H1 (cell line): ENCODE measurements at regions of chr10 and their contacts with region 1.

Region 1: DNA sequence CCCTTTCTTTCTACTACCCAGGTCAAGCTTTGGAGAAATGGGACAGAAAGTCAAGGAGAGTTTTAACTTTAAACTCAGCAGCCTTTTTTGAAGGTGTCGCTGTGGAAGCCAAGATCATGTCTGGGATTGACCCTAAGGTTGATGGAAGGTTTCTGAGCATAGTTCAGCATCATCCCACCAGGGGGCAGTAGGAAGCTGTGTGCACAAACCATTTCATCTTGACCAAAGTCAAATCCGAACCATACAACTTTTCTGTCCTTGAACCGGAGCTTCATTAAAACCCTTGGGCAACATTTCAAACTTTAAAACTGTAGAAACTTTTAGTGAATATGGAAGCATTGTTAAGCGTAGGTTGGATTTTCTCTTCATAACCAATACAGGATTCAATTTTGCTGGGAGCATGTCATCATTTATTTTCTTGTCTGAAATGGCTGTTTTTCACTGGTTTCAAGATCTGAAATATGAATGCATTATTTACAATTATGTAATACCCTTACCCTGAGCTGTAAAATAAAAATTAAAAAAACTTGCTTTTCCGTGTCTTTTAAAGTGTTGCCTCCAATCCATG is 214.4 kb upstream of the KIAA1217 start:
- DNase-seq: peak; percentile 27 to 84
- H3K4me3 ChIP-seq: no peak overlapping the region
- H3K27ac ChIP-seq: no peak overlapping the region
- H3K4me1 ChIP-seq: no peaks in the 10 kb centered on the region
- H3K27me3 ChIP-seq: no peaks in the 10 kb centered on the region
- CTCF ChIP-seq: peak; percentile 40 to 86 (median 78)
- EP300 ChIP-seq: no peak
- POLR2A ChIP-seq: no peak
- RAD21 ChIP-seq: peak; percentile 94

Region 2: DNA sequence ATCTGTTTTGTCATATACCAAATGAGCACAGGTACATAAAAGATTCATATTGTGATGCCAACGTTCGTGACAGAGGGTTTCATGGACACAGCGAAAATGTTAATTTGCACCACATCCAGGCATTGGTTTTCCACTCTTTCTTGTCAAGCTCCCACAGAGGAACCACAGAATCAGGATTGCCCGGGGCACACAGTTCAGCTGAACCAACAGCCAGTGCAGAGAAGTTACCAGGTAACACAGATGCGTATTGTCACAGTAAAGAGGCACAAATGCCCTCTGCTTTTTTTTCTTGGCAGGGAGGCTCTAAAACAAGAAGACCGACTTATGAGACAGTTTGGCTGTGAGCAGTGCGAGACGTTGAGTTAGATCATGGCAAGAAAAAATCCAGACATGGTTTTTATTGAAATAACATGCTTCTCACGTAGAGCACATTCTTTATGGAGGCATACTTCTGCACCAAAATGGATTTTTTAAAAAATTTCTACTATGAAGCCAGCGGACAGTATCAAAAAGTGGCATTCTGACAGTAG is 116.7 kb before region 1 on chr10:
- CTCF ChIA-PET with region 1: no interaction called
- POLR2A ChIA-PET with region 1: no interaction called
- DNase-seq: no peak
- H3K4me3 ChIP-seq: no peak overlapping the region
- H3K27ac ChIP-seq: no peak overlapping the region
- H3K4me1 ChIP-seq: no peaks in the 10 kb centered on the region
- H3K27me3 ChIP-seq: no peaks in the 10 kb centered on the region
- CTCF ChIP-seq: no peak
- EP300 ChIP-seq: no peak
- POLR2A ChIP-seq: no peak
- RAD21 ChIP-seq: no peak

Region 3: DNA sequence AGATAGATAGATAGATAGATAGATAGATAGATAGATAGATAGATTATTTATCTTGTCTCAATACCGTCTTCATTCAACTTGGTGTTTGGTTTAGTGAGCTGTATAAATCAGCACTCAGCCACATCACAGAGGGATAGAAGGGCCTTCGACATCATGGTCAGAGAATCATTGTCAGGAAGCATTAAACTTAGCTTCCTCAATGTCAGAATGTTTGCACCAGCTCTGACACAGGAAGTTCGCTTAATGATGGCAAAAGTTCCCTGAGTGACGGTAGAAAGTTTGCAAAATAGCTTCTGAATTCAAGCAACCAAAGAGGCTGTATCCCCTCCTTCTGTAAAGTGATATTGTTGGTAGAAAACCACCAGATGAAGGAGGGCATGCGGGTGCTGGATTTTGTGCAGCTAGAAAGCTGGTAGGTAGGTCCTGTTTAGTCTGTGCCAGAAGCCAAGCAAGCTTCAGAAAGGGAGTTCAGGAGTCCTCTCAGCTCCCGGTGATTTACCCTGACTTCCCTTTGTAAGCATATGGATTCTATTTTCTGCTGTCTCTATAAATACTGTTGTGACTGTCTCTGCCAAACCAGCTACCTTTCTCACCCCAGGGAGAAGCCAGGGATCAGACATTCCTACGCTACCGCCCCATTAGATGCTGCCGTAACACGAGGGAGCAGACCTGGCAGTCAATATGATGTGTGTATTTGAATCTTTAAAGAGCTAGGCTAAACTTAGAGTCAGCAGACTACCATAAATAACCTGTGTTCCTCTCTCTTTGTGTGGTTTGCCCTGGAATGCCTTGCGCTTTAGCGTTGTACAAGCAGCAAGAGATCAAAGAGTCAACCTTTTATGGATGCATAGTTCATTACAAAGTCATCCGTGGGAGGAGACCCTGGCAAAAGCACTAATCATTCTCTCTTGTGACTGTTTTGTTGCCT is 13.9 kb after region 1 on chr10:
- CTCF ChIA-PET with region 1: interaction called, 20 read pairs
- POLR2A ChIA-PET with region 1: no interaction called
- DNase-seq: no peak
- H3K4me3 ChIP-seq: no peak overlapping the region
- H3K27ac ChIP-seq: no peak overlapping the region
- H3K4me1 ChIP-seq: peaks cover 0 to 11% (median 5%) of the 10 kb centered on the region in 4 experiments; a peak in 4 of 7 replicates
- H3K27me3 ChIP-seq: no peaks in the 10 kb centered on the region
- CTCF ChIP-seq: no peak
- EP300 ChIP-seq: no peak
- POLR2A ChIP-seq: no peak
- RAD21 ChIP-seq: no peak